Gastrocnemius medialis (tissue), 4 donors: ENCODE measurements at regions of chr18 and their contacts with region 1.

Region 1: DNA sequence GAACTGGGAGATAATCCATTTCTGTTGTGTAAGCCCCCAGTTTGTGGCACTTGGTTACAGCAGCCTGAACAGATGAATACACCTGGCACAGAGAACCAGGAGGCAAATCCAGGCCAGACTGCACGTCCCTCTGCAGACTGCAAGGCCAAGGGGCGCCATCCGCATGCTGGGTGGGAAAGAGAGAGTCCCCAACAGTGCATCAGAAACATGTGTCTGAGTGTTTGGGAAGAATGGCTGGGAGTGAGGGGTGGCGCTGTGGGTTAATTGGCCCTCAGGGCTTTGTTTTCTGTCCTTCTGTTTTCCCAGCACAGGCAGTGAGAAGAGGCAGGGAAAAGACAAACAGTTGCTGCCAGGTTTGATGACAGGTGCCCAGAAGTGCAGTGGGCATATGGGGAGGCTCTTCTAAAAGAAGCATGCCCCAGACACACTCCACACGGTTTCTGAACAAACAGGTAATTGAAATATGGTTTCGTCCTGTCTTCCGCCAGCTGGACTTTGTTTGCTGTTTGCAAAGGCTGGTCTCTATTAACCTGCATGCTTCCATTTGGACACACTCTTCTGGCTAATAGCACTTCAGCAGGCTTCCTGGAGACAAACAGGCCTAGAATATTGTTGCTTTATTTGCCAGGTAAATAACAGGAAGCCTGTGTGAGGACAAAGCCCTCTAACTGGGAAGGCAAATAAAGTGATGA is 43.4 kb upstream of the SEC11C start:
- DNase-seq: no peak
- ATAC-seq: no peak
- H3K4me3 ChIP-seq: no peak overlapping the region
- H3K27ac ChIP-seq: no peak overlapping the region
- H3K4me1 ChIP-seq: no peaks in the 10 kb centered on the region
- H3K27me3 ChIP-seq: no peaks in the 10 kb centered on the region
- CTCF ChIP-seq: no peak
- POLR2A ChIP-seq: no peak

Region 2: DNA sequence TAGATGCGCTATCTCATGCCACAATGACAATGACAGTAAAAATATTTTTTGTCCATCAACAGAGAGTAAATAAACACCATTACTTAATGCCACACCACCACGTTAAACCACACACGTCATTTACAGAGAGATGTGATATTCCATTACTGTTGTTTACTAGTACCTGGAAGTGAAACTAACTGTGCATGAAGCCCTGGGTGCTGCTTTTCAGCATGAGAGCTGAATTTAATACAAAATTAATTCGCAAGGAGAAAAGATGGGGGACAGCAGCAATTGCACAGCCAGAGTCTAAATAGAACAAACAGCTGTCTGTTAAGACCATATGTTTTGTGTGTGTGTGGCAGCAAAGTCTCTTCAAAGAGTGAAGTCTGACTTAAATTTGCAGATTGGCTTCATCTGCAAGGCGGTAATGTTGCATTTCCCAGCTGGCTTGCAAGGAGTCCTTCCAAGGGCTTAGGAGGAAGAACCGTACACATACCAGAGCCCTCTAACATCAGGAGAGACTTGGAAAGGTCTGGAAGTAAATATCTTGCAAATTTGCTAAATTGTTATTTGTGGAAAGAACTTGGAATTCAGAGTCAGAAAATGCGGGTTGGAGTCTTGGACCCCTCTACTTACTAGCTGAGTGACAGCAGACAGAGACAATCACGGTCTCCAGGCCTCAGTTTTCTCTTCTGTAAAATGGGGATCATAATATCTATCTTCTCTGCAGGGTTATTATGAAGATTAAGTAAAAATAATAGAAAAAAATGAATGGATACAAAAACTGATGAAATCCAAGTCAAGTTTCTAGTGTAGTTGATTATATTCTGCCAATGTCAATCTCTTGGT is 595.0 kb before region 1 on chr18:
- in situ Hi-C with region 1: loop called in 1 of 4 experiments (anchors 25 kb)
- intact Hi-C with region 1: no loop called
- DNase-seq: no peak
- ATAC-seq: no peak
- H3K4me3 ChIP-seq: no peak overlapping the region
- H3K27ac ChIP-seq: no peak overlapping the region
- H3K4me1 ChIP-seq: no peaks in the 10 kb centered on the region
- H3K27me3 ChIP-seq: no peaks in the 10 kb centered on the region
- CTCF ChIP-seq: no peak
- POLR2A ChIP-seq: no peak

Region 3: DNA sequence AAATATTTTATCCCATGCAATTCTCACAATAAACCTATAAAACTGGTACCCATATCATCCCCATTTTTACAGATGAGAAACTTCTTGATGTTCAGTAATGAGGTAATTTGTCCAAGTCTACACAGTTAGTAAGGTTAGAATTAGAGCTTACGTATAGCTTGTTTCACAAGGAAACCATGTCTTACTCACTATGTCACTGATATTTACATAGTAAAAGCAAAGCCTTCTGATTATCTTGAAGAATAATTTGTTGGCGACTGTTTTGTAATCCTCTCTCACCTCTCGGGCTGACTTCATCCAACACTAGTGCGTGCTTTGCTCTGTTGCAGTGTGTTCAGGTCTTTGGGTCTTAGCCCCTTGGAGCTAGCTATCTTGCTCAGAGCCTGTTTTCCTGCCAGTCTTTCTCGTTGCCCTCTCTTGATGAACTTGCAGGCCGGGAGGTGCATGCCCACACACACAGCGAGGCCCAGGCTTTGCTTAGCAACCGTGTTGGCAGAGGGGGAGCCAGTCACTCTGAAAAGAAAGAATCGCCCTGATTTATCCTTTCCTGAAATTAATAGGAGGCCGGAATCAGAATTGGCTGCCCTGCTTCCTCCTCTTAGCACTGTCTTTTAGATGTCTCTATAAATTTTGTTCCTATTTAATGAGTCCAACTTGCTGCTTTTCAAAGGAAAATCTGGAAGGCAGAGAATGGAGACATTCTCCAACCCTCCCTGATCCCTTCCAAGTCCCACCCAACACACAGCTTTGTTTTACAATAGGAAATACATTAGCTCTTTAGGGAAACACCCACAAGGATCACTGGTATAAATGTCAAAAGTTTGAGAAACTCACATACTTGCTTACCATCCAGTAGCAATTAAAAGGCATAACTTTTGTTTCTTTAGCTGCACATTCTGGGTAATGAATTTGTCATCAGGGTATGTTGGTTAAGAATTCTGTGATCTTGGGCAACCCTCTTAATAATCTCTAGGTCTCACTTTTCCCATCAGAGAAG is 54.1 kb before region 1 on chr18:
- in situ Hi-C with region 1: no loop called
- intact Hi-C with region 1: no loop called
- DNase-seq: no peak
- ATAC-seq: peak; percentile 35 to 46
- H3K4me3 ChIP-seq: no peak overlapping the region
- H3K27ac ChIP-seq: peak overlapping the region; percentile 1 to 47 (median 38)
- H3K4me1 ChIP-seq: peaks cover 5 to 11% of the 10 kb centered on the region in 2 donors
- H3K27me3 ChIP-seq: no peaks in the 10 kb centered on the region
- CTCF ChIP-seq: no peak
- POLR2A ChIP-seq: no peak